ENCODE measurements at regions of chr17 and their contacts with region 1.

Region 1: DNA sequence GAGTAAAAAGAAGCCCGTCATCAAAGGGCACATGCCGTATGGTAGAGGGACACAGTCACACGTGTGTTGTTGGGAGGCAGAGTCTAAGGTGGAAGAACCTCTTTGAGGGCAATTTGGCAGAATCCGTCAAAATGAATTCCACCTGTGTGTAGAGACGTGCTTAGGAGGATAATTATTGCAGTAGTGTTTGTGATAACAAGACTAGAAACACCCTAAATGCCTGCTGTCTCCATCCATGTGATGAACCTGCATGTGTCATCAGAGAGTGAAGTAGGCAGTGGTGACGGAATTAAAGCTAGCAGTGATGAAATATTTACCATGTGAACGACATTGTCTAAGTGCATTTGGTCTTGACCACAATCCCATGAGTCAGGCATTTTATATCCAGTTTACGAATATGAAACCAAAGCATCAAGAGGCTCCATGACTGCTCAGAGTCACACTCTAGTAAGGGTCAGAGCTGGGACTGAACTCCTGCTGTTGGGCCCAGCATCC is 61.3 kb upstream of the ADORA2B start:
- DNase-seq: peak; percentile 92 to 96 (median 95)
- H3K4me3 ChIP-seq: no peak overlapping the region
- H3K4me3 Mint-ChIP-seq: peak overlapping the region in 1 of 2 donors; percentile 55
- H3K27ac ChIP-seq: peak overlapping the region; percentile 46 to 79
- H3K27ac Mint-ChIP-seq: peak overlapping the region; percentile 70 to 95 (median 93)
- H3K4me1 ChIP-seq: peaks cover 23 to 37% of the 10 kb centered on the region in 2 donors
- H3K4me1 Mint-ChIP-seq: peaks cover 46% of the 10 kb centered on the region
- H3K27me3 ChIP-seq: no peaks in the 10 kb centered on the region
- H3K27me3 Mint-ChIP-seq: peaks cover 0 to 4% (median 3%) of the 10 kb centered on the region in 3 donors
- CTCF ChIP-seq: no peak

Region 2: DNA sequence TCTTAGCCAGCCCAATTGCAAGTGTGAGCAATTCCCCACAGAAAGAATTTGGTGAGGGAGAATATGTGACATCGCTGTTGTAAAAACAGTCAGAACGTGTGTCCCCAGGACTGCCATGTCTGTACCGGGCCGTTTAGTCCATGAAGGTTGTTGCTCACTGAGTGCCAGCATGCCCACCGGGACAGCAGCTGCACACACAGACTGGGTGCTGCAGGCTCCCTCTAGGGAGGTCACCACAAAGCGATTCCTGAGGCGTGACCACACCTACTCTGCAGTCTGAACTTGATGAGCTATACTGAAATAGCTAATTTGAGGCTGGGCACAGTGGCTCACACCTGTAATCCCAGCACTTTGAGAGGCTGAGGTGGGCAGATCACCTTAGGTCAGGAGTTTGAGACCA is 17.2 kb after region 1 on chr17:
- intact Hi-C with region 1: no loop called
- DNase-seq: no peak
- H3K4me3 ChIP-seq: no peak overlapping the region
- H3K4me3 Mint-ChIP-seq: no peak overlapping the region
- H3K27ac ChIP-seq: no peak overlapping the region
- H3K27ac Mint-ChIP-seq: no peak overlapping the region
- H3K4me1 ChIP-seq: peaks cover 0 to 5% of the 10 kb centered on the region in 2 donors
- H3K4me1 Mint-ChIP-seq: peaks cover 10% of the 10 kb centered on the region
- H3K27me3 ChIP-seq: no peaks in the 10 kb centered on the region
- H3K27me3 Mint-ChIP-seq: peaks cover 0 to 3% (median 2%) of the 10 kb centered on the region in 3 donors
- CTCF ChIP-seq: no peak

Region 3: DNA sequence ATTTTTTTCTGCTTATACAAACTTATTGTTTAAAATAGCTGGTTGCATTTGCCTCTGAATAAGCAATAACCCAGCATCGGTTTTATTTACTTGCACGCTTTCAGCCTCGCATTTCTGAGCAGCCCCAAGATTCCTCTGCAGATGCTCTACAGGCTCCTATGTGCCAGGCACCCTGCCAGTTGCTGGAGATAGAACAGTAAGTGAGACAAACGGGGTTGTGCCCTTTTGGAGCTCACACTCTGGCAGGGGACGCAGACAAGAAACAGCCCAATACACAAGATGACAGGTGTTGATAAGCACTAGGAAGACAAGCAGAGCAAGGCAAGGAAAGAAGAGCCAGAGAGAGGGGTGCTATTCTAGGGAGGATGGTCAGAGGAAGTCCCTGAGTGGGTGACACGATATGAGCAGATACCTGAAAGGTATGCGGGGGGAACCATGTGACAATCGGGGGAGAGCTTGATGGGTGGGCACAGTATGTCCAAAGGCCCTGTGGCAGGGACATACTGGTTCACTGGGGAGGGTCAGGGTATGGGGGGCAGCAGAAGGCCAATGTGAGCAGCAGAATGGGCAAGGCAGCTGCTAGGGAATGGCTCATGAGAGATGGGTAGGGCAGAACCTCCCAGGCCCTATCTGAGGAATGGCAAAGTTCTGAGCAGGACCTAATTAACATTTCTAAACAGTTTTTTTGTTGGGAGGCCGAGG is 42.5 kb after region 1 on chr17:
- intact Hi-C with region 1: loop called (anchors 5 kb)
- DNase-seq: no peak
- H3K4me3 ChIP-seq: no peak overlapping the region
- H3K4me3 Mint-ChIP-seq: no peak overlapping the region
- H3K27ac ChIP-seq: no peak overlapping the region
- H3K27ac Mint-ChIP-seq: peak overlapping the region in 5 of 7 donors; percentile 28 to 99 (median 55)
- H3K4me1 ChIP-seq: peaks cover 31 to 35% of the 10 kb centered on the region in 2 donors
- H3K4me1 Mint-ChIP-seq: peaks cover 36% of the 10 kb centered on the region
- H3K27me3 ChIP-seq: no peaks in the 10 kb centered on the region
- H3K27me3 Mint-ChIP-seq: peaks cover 0 to 11% (median 5%) of the 10 kb centered on the region in 3 donors
- CTCF ChIP-seq: no peak

Region 4: GRCh38 chr17:15954222-15954621 is 70.6 kb after region 1 on chr17:
- intact Hi-C with region 1: loop called in 1 of 2 experiments (anchors 5 kb)
- DNase-seq: peak; percentile 46 to 86 (median 52)
- H3K4me3 ChIP-seq: no peak overlapping the region
- H3K4me3 Mint-ChIP-seq: no peak overlapping the region
- H3K27ac ChIP-seq: no peak overlapping the region
- H3K27ac Mint-ChIP-seq: peak overlapping the region in 4 of 7 donors; percentile 13 to 79 (median 40)
- H3K4me1 ChIP-seq: peaks cover 31 to 40% of the 10 kb centered on the region in 2 donors
- H3K4me1 Mint-ChIP-seq: peaks cover 46% of the 10 kb centered on the region
- H3K27me3 ChIP-seq: no peaks in the 10 kb centered on the region
- H3K27me3 Mint-ChIP-seq: peaks cover 0 to 5% (median 2%) of the 10 kb centered on the region in 3 donors
- CTCF ChIP-seq: no peak

Measured in CD14-positive monocyte (primary cell).